ENCODE measurements at regions of chr3 and their contacts with region 1.

Region 1: DNA sequence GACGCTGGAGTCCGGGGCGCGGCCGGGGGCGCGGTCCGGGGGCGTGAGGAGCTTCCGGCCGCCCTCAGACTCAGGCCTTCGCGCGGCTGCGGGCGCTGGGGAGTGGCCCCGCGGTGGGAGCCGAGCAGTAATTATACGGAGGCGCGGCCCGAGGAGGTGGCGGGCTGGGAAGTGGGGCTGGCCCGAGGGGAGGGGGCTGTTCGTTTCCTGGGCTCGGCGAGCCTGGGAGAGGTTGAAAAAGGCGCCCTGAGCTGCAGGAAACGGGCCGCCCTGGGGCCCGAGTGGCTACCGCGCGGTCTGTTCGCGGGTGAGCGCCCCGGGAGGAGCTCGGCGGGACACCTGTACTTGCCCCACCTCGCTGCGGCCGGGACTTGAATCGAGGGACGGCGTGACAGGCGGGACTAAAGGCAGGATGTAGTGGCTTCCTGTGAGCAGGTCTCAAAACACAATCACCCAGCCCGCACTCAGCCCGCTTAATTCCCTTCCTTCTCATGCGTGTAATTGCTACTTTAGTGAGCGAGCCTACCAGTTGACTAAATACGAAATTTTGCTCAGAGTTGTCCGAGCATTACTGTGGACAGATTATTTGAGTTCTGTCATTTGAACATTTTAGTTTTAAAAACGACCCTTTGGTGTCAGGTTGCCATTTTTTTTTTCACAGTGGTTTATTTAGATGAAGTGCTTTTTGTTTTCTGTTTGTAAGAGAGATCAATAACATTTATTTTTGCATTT is 860 bp downstream of the RASA2 start:
- DNase-seq: peak; percentile 45 to 84
- H3K4me3 ChIP-seq: peak overlapping the region; percentile 87 to 88
- H3K27ac ChIP-seq: peak overlapping the region; percentile 88 to 95
- H3K4me1 ChIP-seq: peaks cover 3 to 8% of the 10 kb centered on the region in 2 donors
- H3K27me3 ChIP-seq: no peaks in the 10 kb centered on the region
- CTCF ChIP-seq: no peak

Region 2: DNA sequence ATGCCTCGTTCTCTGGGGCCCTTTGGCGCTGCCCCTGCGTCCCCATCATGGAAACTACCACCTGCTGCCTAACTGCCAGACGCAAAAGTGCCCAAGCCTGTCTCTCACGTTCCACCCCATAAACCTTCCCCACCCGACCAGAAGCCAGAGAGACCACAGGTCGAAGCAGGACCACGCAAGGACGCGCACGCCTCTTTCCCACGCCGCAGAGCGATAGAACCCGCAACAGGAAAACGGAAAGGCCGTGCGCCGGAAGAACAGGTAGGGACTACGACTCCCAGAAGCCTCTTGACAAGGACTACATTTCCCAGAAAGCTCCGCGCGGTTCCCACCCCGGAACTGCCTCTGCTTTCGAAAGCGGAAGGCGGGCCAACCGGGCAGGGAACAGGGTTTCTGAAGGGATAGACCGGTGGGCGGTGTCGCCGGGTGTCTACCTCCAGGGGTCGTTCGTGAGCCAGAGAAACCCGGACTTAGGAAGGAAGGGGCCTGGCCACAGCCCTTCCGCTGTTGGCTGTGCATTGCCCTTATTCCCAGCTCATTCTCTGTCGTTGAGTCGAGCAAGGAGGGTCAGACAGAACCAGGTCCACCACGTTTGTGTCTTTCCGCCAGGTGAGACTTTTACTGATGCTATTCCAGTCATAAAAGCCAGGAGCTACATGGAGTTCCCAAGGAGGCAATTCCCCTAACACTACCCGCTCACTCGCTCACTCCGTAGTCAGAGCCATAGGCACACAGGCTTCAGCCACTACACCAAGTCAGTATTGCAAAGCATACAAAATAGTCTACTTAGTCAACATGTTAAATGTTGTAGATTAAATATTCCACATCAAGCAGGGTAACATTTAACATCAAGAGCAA is 176.0 kb before region 1 on chr3:
- intact Hi-C with region 1: loop called (anchors 1 kb)
- DNase-seq: peak; percentile 95 to 99
- H3K4me3 ChIP-seq: peak overlapping the region; percentile 59 to 89
- H3K27ac ChIP-seq: peak overlapping the region; percentile 63 to 82
- H3K4me1 ChIP-seq: peaks cover 0 to 8% of the 10 kb centered on the region in 2 donors
- H3K27me3 ChIP-seq: no peaks in the 10 kb centered on the region
- CTCF ChIP-seq: peak; percentile 72 to 85 (median 76)

Measured in ascending aorta (tissue), 2 donors.